ENCODE measurements at regions of chr3 and their contacts with region 1.

Region 1: DNA sequence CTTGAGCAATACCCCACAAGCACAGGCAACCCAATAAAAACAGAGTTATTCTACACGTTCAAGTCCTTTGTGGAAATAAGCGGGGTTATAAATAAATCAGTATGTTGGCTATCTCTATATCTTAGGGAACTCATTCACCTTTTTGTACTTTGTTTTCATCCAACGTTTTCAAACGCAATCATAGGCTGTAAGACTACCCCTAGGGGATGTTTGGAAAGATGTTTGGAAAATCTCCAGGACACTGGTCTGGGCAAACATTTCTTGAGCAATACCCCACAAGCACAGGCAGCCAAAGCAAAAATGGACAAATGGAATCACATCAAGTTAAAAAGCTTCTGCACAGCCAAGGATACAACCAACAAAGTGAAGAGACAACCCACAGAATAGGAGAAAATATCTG is 70.1 kb downstream of the CLDN11 start:
- DNase-seq: no peak
- H3K4me3 ChIP-seq: no peak overlapping the region
- H3K27ac ChIP-seq: peak overlapping the region in 40 of 59 donors; percentile 4 to 100 (median 98)
- H3K27me3 ChIP-seq: no peaks in the 10 kb centered on the region
- CTCF ChIP-seq: no peak

Region 2: GRCh38 chr3:170419557-170420087 is 69.2 kb before region 1 on chr3:
- intact Hi-C with region 1: loop called (anchors 5 kb)
- DNase-seq: peak in 8 of 10 donors; percentile 31 to 78 (median 56)
- H3K4me3 ChIP-seq: peak overlapping the region; percentile 54 to 92 (median 72)
- H3K27ac ChIP-seq: peak overlapping the region; percentile 38 to 98 (median 92)
- H3K27me3 ChIP-seq: peaks cover 0 to 27% (median 3%) of the 10 kb centered on the region in 45 donors
- CTCF ChIP-seq: peak in 5 of 56 donors; percentile 8 to 37 (median 20)

Region 3: DNA sequence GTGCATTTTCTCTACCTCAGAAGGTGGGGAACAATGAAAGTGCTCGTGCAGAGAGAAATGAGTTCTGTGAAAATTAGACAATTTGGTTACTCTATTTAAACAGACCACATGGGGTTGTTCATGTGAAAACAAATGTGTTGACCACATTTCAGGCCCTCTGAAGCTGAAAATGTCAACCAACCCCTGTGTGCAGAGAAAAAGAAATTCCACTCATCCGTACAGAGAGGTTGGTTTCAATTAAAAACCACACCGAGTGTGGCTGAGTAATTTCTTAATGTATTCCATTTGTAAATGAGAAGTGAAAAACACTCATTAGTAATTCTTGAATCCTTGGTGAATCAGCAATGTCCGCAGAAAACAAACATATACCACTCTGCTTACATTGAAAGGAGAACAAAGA is 144.0 kb after region 1 on chr3:
- intact Hi-C with region 1: no loop called
- DNase-seq: no peak
- H3K4me3 ChIP-seq: no peak overlapping the region
- H3K27ac ChIP-seq: peak overlapping the region in 2 of 59 donors; percentile 15 to 52
- H3K27me3 ChIP-seq: no peaks in the 10 kb centered on the region
- CTCF ChIP-seq: no peak